ENCODE measurements at regions of chr1 and their contacts with region 1.

Region 1: GRCh38 chr1:94335950-94336349 is 82.2 kb upstream of the ABCD3 start:
- DNase-seq: no peak
- H3K4me3 ChIP-seq: no peak overlapping the region
- H3K27ac ChIP-seq: no peak overlapping the region
- H3K4me1 ChIP-seq: peaks cover 0 to 7% (median 0%) of the 10 kb centered on the region in 4 experiments; a peak in 1 of 7 replicates
- H3K27me3 ChIP-seq: no peaks in the 10 kb centered on the region
- CTCF ChIP-seq: peak in 2 of 3 experiments; percentile 87 to 98; a peak in 3 of 4 replicates
- EP300 ChIP-seq: no peak
- POLR2A ChIP-seq: no peak
- RAD21 ChIP-seq: peak; percentile 99 to 100

Region 2: DNA sequence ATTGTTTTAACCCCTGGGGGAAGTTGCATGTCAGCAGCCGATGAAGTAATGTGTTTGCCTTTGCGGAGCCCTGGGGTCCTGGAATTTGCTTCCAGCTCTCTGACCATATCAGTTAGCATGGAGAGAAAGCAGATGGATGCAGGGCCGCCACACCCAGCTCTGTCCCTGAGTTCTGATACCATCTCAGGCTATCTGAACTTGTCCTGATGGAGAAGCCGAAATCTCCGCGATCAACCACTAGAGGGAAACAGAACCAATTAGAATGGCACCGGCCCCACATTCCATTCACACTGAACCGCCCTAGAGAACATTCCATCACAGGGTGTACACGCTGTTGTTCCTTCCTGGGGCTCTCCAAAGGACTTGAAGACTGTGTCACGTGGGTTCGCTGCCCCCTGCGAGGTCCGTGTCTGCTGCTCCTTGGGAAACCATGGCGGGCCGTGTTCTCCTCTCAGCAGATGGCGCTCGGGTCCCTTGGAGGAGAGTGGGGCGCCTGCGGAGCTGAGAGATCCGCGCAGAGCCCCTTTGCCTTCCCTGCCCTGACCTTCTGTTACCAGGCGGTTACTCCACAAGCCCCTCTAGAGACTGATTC is 290.4 kb before region 1 on chr1:
- CTCF ChIA-PET with region 1: interaction called, 807 read pairs
- POLR2A ChIA-PET with region 1: interaction called, 4 read pairs
- DNase-seq: peak; percentile 81 to 84
- H3K4me3 ChIP-seq: peak overlapping the region in 1 of 4 experiments; percentile 34; a peak in 2 of 8 replicates
- H3K27ac ChIP-seq: no peak overlapping the region
- H3K4me1 ChIP-seq: peaks cover 0 to 7% (median 5%) of the 10 kb centered on the region in 4 experiments; a peak in 6 of 7 replicates
- H3K27me3 ChIP-seq: no peaks in the 10 kb centered on the region
- CTCF ChIP-seq: peak; percentile 51 to 78 (median 62)
- EP300 ChIP-seq: no peak
- POLR2A ChIP-seq: no peak
- RAD21 ChIP-seq: peak; percentile 73 to 77

Region 3: DNA sequence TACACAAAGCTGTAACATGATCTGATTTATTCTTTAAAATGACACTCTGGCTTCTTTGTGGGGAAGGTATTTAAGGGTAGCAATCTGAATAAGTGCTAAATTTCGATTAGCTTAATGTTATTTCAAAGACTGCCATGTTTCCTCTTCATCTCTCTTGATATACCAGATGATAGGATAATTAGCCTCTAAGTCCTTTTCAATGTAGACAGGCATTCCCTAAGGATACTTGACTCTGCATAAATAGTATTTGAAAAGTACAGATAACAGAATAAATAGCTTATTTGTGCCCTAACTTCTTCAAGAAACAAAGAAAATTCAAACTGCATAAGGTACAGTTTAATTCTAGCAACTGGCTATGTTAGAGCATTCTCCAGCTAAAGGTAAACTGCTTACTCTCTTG is 144.7 kb before region 1 on chr1:
- CTCF ChIA-PET with region 1: interaction called, 14 read pairs
- POLR2A ChIA-PET with region 1: no interaction called
- DNase-seq: no peak
- H3K4me3 ChIP-seq: no peak overlapping the region
- H3K27ac ChIP-seq: no peak overlapping the region
- H3K4me1 ChIP-seq: no peaks in the 10 kb centered on the region
- H3K27me3 ChIP-seq: no peaks in the 10 kb centered on the region; a peak in 1 of 7 replicates
- CTCF ChIP-seq: no peak
- EP300 ChIP-seq: no peak
- POLR2A ChIP-seq: no peak
- RAD21 ChIP-seq: no peak

Region 4: DNA sequence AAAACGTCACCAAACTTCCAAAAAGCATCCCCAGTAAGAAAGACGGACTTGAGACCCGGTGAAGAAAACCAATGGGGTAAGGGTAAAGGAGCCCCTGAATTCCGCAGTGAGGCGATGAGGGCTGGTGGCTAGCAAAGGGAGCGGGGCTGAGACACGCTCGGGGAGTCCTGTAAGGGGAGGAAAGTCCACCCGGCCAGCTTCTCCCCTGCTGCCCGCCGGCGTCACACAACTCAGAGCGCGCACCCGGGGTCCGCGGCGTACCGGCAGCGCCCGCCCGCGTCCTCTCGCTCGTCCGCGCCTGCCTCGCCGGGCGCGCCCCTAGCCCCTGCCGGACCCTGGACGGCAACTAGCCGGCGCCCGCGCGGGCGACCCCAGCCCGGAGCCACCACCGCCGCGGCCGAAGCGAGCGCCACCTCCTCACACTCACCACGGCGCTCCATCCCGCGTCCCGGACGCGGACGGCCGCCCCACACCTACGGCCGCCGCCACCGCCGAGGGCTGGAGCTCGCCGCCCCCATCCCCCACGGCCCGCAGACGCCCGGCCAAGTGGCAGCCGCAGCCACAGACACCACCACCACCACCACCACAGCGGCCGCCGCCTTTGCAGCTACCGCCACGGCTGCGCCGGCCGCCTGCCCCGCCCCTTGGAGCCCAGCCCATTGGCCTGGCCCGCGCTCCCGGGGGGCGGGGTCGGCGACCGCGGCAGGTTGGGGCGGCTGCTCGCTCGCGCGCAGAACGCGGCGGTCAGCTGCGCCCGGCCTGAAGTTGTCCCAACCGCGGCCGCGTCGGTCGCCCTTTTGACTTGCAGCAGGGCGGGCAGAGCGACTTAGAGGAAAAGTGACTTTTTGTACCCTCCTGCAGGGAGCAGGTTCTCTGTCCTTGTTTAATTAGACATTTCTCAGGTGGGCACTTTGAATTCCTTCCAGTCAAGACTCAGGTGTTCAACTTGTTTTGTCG is 88.5 kb before region 1 on chr1:
- CTCF ChIA-PET with region 1: interaction called, 82 read pairs
- POLR2A ChIA-PET with region 1: no interaction called
- DNase-seq: peak in 1 of 2 experiments; percentile 91
- H3K4me3 ChIP-seq: peak overlapping the region; percentile 68 to 79 (median 70)
- H3K27ac ChIP-seq: no peak overlapping the region
- H3K4me1 ChIP-seq: peaks cover 0 to 5% (median 3%) of the 10 kb centered on the region in 4 experiments; a peak in 4 of 7 replicates
- H3K27me3 ChIP-seq: peaks cover 20 to 60% (median 47%) of the 10 kb centered on the region in 4 experiments
- CTCF ChIP-seq: 0 out of 4 replicates have a peak, but pooled peaks of 1 of the 3 experiments have one; percentile 1
- EP300 ChIP-seq: no peak
- POLR2A ChIP-seq: 0 out of 3 replicates have a peak, but pooled peaks of 1 of the 2 experiments have one; percentile 22
- RAD21 ChIP-seq: peak in 1 of 2 experiments; percentile 14; a peak in 1 of 4 replicates

Region 5: GRCh38 chr1:94299627-94300552 is 36.1 kb before region 1 on chr1:
- CTCF ChIA-PET with region 1: interaction called, 58 read pairs
- POLR2A ChIA-PET with region 1: no interaction called
- DNase-seq: no peak
- H3K4me3 ChIP-seq: no peak overlapping the region
- H3K27ac ChIP-seq: no peak overlapping the region
- H3K4me1 ChIP-seq: peaks cover 0 to 8% (median under 1%) of the 10 kb centered on the region in 4 experiments; a peak in 1 of 7 replicates
- H3K27me3 ChIP-seq: no peaks in the 10 kb centered on the region
- CTCF ChIP-seq: no peak
- EP300 ChIP-seq: no peak
- POLR2A ChIP-seq: no peak
- RAD21 ChIP-seq: no peak

Region 6: GRCh38 chr1:94358630-94359599 is 23.0 kb after region 1 on chr1:
- CTCF ChIA-PET with region 1: interaction called, 11 read pairs
- POLR2A ChIA-PET with region 1: no interaction called
- DNase-seq: no peak
- H3K4me3 ChIP-seq: no peak overlapping the region
- H3K27ac ChIP-seq: no peak overlapping the region
- H3K4me1 ChIP-seq: no peaks in the 10 kb centered on the region
- H3K27me3 ChIP-seq: no peaks in the 10 kb centered on the region
- CTCF ChIP-seq: no peak
- EP300 ChIP-seq: no peak
- POLR2A ChIP-seq: no peak
- RAD21 ChIP-seq: no peak

Measured in H1 (cell line).